ENCODE measurements at regions of chr3 and their contacts with region 1.

Region 1: GRCh38 chr3:116863822-116864589 is 154.4 kb downstream of the TUSC7 start:
- DNase-seq: peak; percentile 79
- H3K4me3 ChIP-seq: peak overlapping the region; percentile 17 to 66 (median 28)
- H3K27ac ChIP-seq: no peak overlapping the region
- H3K4me1 ChIP-seq: peaks cover 3% of the 10 kb centered on the region
- H3K27me3 ChIP-seq: peaks cover 4% of the 10 kb centered on the region in 2 experiments
- CTCF ChIP-seq: peak; percentile 41 to 45
- POLR2A ChIP-seq: no peak

Region 2: DNA sequence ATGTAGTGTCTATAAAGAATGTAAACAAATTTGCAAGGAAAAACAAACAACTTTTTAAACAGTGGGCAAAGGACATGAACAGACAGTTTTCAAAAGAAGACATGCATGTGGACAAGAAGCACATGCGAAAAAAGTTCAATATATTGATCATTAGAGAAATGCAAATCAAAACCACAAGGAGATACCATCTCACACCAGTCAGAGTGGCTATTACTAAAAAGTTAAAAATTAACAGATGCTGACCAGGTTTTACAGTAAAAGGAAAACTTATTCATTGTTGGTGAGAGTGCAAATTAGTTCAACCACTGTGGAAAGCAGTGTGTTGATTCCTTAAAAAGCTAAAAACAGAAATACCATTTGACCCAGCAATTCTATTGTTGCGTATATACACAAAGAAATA is 371.6 kb before region 1 on chr3:
- CTCF ChIA-PET with region 1: no interaction called
- POLR2A ChIA-PET with region 1: no interaction called
- dilution Hi-C with region 1: no loop called
- intact Hi-C with region 1: no loop called
- DNase-seq: no peak
- H3K4me3 ChIP-seq: no peak overlapping the region
- H3K27ac ChIP-seq: no peak overlapping the region
- H3K4me1 ChIP-seq: no peaks in the 10 kb centered on the region
- H3K27me3 ChIP-seq: no peaks in the 10 kb centered on the region
- CTCF ChIP-seq: no peak
- POLR2A ChIP-seq: no peak

Region 3: GRCh38 chr3:116929505-116930222 is 65.7 kb after region 1 on chr3:
- CTCF ChIA-PET with region 1: no interaction called
- POLR2A ChIA-PET with region 1: no interaction called
- dilution Hi-C with region 1: no loop called
- intact Hi-C with region 1: loop called (anchors 2 kb)
- DNase-seq: peak; percentile 76
- H3K4me3 ChIP-seq: peak overlapping the region in 1 of 3 experiments; percentile 38
- H3K27ac ChIP-seq: peak overlapping the region; percentile 93
- H3K4me1 ChIP-seq: peaks cover 26% of the 10 kb centered on the region
- H3K27me3 ChIP-seq: no peaks in the 10 kb centered on the region
- CTCF ChIP-seq: no peak
- POLR2A ChIP-seq: no peak

Region 4: GRCh38 chr3:117355566-117355965 is 491.6 kb after region 1 on chr3:
- CTCF ChIA-PET with region 1: interaction called, 5 read pairs
- POLR2A ChIA-PET with region 1: no interaction called
- dilution Hi-C with region 1: no loop called
- intact Hi-C with region 1: loop called (anchors 1 kb)
- DNase-seq: peak; percentile 45
- H3K4me3 ChIP-seq: no peak overlapping the region
- H3K27ac ChIP-seq: no peak overlapping the region
- H3K4me1 ChIP-seq: no peaks in the 10 kb centered on the region
- H3K27me3 ChIP-seq: no peaks in the 10 kb centered on the region
- CTCF ChIP-seq: peak; percentile 32 to 49
- POLR2A ChIP-seq: no peak

Region 5: GRCh38 chr3:117526470-117527079 is 662.6 kb after region 1 on chr3:
- CTCF ChIA-PET with region 1: interaction called, 12 read pairs
- POLR2A ChIA-PET with region 1: no interaction called
- dilution Hi-C with region 1: no loop called
- intact Hi-C with region 1: loop called (anchors 1 kb)
- DNase-seq: peak; percentile 40
- H3K4me3 ChIP-seq: no peak overlapping the region
- H3K27ac ChIP-seq: no peak overlapping the region
- H3K4me1 ChIP-seq: no peaks in the 10 kb centered on the region
- H3K27me3 ChIP-seq: peaks cover 0 to 3% of the 10 kb centered on the region in 2 experiments
- CTCF ChIP-seq: peak; percentile 42 to 53
- POLR2A ChIP-seq: no peak

Region 6: DNA sequence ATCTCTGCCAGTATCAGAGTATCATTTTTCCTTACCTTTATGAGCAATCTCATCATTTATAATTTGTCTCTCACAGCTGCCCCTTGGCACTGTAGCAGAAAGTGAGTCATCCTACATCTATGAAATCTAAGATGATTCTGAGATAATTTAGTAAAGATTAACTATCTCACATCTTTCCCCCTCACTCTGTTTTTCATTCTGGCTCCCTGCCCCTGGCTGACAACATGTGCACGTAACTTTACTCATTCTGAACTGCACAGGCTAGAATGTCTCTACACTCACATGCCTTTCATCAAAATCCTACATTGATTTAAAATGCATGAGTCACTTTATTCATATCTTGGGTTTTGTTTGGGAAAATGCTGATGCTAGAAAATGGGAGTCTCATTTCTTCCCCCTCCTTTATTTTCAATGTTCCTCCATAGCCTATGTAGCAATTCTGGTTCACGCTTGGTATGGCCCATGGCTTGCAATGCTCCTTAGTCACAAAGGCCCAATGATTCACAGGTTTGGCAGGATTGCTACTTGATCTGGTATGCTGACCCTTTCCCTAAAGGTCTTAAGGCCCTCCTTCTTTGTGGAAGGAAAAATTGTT is 684.0 kb after region 1 on chr3:
- CTCF ChIA-PET with region 1: no interaction called
- POLR2A ChIA-PET with region 1: no interaction called
- dilution Hi-C with region 1: no loop called
- intact Hi-C with region 1: loop called (anchors 1 kb)
- DNase-seq: no peak
- H3K4me3 ChIP-seq: no peak overlapping the region
- H3K27ac ChIP-seq: no peak overlapping the region
- H3K4me1 ChIP-seq: no peaks in the 10 kb centered on the region
- H3K27me3 ChIP-seq: no peaks in the 10 kb centered on the region
- CTCF ChIP-seq: no peak
- POLR2A ChIP-seq: no peak

Region 7: GRCh38 chr3:117997201-117998049 is 1133.4 kb after region 1 on chr3:
- CTCF ChIA-PET with region 1: interaction called, 4 read pairs
- POLR2A ChIA-PET with region 1: no interaction called
- dilution Hi-C with region 1: no loop called
- intact Hi-C with region 1: loop called (anchors 2 kb)
- DNase-seq: peak; percentile 84
- H3K4me3 ChIP-seq: peak overlapping the region in 2 of 3 experiments; percentile 32 to 44
- H3K27ac ChIP-seq: no peak overlapping the region
- H3K4me1 ChIP-seq: peaks cover 4% of the 10 kb centered on the region
- H3K27me3 ChIP-seq: peaks cover 9 to 11% of the 10 kb centered on the region in 2 experiments
- CTCF ChIP-seq: peak; percentile 84 to 97
- POLR2A ChIP-seq: no peak

Measured in endothelial cell of umbilical vein (primary cell).